CD4-positive, alpha-beta T cell (primary cell): ENCODE measurements at regions of chr20 and their contacts with region 1.

Region 1: GRCh38 chr20:33489495-33490022 is 337 bp upstream of the CBFA2T2 start:
- DNase-seq: peak; percentile 97 to 100 (median 99)
- ATAC-seq: peak; percentile 96
- H3K4me3 ChIP-seq: peak overlapping the region; percentile 57
- H3K4me3 Mint-ChIP-seq: peak overlapping the region; percentile 94
- H3K27ac ChIP-seq: peak overlapping the region; percentile 92 to 95
- H3K27ac Mint-ChIP-seq: peak overlapping the region; percentile 96
- H3K4me1 ChIP-seq: peaks cover 26% of the 10 kb centered on the region
- H3K4me1 Mint-ChIP-seq: peaks cover 36% of the 10 kb centered on the region
- H3K27me3 ChIP-seq: no peaks in the 10 kb centered on the region
- H3K27me3 Mint-ChIP-seq: no peaks in the 10 kb centered on the region
- CTCF ChIP-seq: no peak

Region 2: DNA sequence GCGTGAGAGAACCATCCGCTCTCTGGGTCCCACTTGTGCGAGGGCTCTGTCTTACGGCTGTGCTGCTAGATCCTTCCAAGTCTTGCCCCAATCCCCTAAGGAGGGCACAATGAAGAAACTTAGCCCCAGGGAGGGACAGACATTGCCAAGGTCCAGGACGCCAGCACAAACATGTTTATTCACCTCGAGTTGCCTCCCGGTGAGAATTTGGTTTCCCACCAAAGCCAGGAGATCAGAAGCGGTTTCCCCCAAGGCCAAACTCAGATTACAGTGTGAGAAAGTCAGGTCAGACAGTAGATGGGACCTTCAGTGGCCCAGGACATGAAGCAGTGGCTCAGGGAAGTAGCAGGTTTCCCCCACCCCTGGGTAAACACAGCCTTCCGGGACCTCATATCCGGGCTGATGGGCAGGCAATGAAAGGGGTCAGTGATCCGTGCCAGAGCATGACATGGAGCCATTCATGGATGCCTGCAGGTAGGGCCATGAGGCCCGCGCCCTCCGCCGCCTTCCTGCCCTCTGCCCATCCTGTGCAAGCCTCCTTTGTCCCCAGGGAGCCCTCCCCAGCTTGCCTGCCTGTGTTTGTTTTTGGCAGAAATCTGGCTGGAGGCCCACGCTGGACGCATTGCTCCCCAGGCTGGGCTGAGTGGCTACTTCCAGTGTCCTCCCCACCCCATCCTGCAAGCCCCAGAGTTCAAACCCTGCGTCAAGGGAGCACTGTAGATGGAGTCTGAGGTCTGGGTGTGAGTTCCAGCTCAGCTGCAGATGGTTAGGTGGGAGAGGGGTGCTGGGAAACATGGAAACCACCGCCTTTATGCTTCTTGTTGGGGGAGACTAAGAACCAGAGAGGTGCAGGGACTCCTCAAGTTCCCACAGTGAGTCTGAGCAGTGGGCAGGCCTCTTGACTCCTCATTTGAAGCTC is 480.1 kb before region 1 on chr20:
- CTCF ChIA-PET with region 1: no interaction called
- POLR2A ChIA-PET with region 1: no interaction called
- intact Hi-C with region 1: no loop called
- DNase-seq: no peak
- ATAC-seq: no peak
- H3K4me3 ChIP-seq: no peak overlapping the region
- H3K4me3 Mint-ChIP-seq: no peak overlapping the region
- H3K27ac ChIP-seq: no peak overlapping the region
- H3K27ac Mint-ChIP-seq: no peak overlapping the region
- H3K4me1 ChIP-seq: peaks cover 10% of the 10 kb centered on the region
- H3K4me1 Mint-ChIP-seq: peaks cover 11% of the 10 kb centered on the region
- H3K27me3 ChIP-seq: no peaks in the 10 kb centered on the region
- H3K27me3 Mint-ChIP-seq: no peaks in the 10 kb centered on the region
- CTCF ChIP-seq: no peak

Region 3: DNA sequence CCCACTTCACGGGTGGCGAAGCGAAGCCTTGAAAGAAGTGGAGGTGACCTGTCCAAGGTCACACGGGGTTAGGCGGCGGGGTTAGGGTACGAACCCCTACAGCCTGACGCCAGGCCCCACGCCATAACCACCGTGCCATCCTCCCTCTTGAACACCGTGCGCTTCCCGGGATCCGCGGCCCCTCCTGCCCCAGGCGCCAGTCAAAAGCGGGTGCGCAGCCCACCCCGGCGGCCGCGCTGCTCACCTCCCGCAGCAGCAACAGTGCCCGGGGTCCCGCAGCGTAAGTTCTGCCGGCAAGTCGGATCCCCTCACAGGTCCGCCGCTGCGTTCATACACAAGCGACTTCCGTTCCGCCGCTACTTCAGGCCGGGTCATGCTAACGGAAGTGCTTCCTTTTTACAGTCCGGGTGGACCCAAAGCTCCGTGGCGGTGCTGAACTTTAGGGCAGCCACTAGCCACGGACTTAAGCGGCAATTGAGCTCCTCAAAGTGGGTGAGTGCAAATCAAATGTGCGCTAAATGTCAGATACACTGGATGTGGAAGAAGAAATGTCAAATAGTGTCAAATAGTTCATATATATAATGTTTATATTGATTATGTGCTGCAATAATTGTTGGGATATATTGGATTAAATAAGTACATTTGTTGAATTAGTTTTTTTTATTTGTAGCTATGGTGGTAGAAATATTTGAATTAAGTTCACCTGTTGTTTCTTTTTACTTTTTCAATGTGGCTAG is 88.2 kb before region 1 on chr20 and contains the start of gene CDK5RAP1:
- CTCF ChIA-PET with region 1: no interaction called
- POLR2A ChIA-PET with region 1: interaction called, 11 read pairs
- intact Hi-C with region 1: loop called in 1 of 2 experiments (anchors 5 kb)
- DNase-seq: peak; percentile 73 to 93 (median 78)
- ATAC-seq: peak; percentile 95
- H3K4me3 ChIP-seq: peak within 1 kb of the TSS; percentile 99
- H3K4me3 Mint-ChIP-seq: peak within 1 kb of the TSS; percentile 96
- H3K27ac ChIP-seq: peak within 1 kb of the TSS in 1 of 2 donors; percentile 24
- H3K27ac Mint-ChIP-seq: peak within 1 kb of the TSS; percentile 79
- H3K4me1 ChIP-seq: peaks cover 48% of the 10 kb centered on the region
- H3K4me1 Mint-ChIP-seq: peaks cover 64% of the 10 kb centered on the region
- H3K27me3 ChIP-seq: no peaks in the 10 kb centered on the region
- H3K27me3 Mint-ChIP-seq: no peaks in the 10 kb centered on the region
- CTCF ChIP-seq: no peak
- total RNA-seq, gene CDK5RAP1: 59.7 to 63.0 TPM

Region 4: DNA sequence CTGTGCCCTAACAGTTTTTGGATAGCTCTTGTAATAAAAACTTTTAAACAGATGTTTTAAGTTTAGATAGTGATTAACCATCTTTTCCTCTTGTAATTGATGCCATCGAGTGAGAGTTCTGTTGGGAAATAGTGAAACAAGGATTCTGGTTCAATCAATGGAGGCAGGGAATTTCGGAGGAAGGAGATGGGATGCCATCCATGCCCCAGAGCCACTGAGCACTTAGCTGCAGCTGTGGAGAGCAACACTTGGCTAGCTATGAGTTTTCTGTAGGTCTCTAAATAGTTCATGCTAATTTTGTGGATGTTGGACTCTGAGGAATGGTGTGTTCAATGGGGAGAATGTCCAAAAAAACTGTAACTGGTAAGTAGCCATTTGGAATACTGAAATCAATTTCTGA is 17.0 kb after region 1 on chr20:
- CTCF ChIA-PET with region 1: interaction called, 4 read pairs
- POLR2A ChIA-PET with region 1: interaction called, 12 read pairs
- intact Hi-C with region 1: no loop called
- DNase-seq: no peak
- ATAC-seq: no peak
- H3K4me3 ChIP-seq: no peak overlapping the region
- H3K4me3 Mint-ChIP-seq: no peak overlapping the region
- H3K27ac ChIP-seq: no peak overlapping the region
- H3K27ac Mint-ChIP-seq: no peak overlapping the region
- H3K4me1 ChIP-seq: no peaks in the 10 kb centered on the region
- H3K4me1 Mint-ChIP-seq: peaks cover 38% of the 10 kb centered on the region
- H3K27me3 ChIP-seq: no peaks in the 10 kb centered on the region
- H3K27me3 Mint-ChIP-seq: no peaks in the 10 kb centered on the region
- CTCF ChIP-seq: no peak

Region 5: DNA sequence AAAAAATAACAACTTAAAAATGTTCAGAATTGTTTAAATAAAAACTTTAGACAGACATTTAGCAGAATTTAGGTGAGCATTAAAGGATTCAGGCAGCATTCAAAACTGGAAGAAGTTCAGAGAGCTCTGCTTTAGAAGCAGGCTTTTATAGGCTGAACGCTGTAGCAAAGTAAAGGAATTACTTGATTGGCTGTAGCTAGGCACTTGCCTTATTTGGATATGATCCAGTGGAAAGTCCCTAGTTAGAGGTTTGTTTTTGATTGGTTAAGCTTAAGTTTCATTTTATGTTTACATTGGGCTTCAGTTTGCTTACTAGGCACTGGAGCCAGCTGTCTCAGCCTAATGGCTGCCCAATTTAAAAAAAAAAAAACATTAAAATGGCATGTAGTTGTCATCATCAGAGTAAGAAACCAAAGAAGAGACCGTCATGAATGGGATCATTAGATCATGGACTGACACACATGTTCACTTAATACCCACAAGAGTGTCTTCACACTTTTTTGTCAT is 65.4 kb after region 1 on chr20:
- CTCF ChIA-PET with region 1: no interaction called
- POLR2A ChIA-PET with region 1: interaction called, 41 read pairs
- intact Hi-C with region 1: loop called in 1 of 2 experiments (anchors 2 kb)
- DNase-seq: peak in 12 of 14 experiments; percentile 4 to 96 (median 28)
- ATAC-seq: peak; percentile 94
- H3K4me3 ChIP-seq: peak overlapping the region; percentile 28
- H3K4me3 Mint-ChIP-seq: peak overlapping the region; percentile 66
- H3K27ac ChIP-seq: peak overlapping the region; percentile 81 to 88
- H3K27ac Mint-ChIP-seq: peak overlapping the region; percentile 95
- H3K4me1 ChIP-seq: peaks cover 17% of the 10 kb centered on the region
- H3K4me1 Mint-ChIP-seq: peaks cover 46% of the 10 kb centered on the region
- H3K27me3 ChIP-seq: no peaks in the 10 kb centered on the region
- H3K27me3 Mint-ChIP-seq: no peaks in the 10 kb centered on the region
- CTCF ChIP-seq: no peak

Region 6: GRCh38 chr20:33731693-33732165 is 242.2 kb after region 1 on chr20 and contains the start of gene ZNF341:
- CTCF ChIA-PET with region 1: no interaction called
- POLR2A ChIA-PET with region 1: interaction called, 17 read pairs
- intact Hi-C with region 1: loop called in 1 of 2 experiments (anchors 10 kb)
- DNase-seq: peak in 13 of 14 experiments; percentile 80 to 96 (median 87)
- ATAC-seq: peak; percentile 83
- H3K4me3 ChIP-seq: peak within 1 kb of the TSS; percentile 85
- H3K4me3 Mint-ChIP-seq: peak within 1 kb of the TSS; percentile 93
- H3K27ac ChIP-seq: peak within 1 kb of the TSS; percentile 57 to 70
- H3K27ac Mint-ChIP-seq: peak within 1 kb of the TSS; percentile 96
- H3K4me1 ChIP-seq: peaks cover 28% of the 10 kb centered on the region
- H3K4me1 Mint-ChIP-seq: peaks cover 22% of the 10 kb centered on the region
- H3K27me3 ChIP-seq: no peaks in the 10 kb centered on the region
- H3K27me3 Mint-ChIP-seq: no peaks in the 10 kb centered on the region
- CTCF ChIP-seq: peak; percentile 76
- total RNA-seq, gene ZNF341: 2.1 to 2.7 TPM